Activated CD8-positive, alpha-beta T cell treated with anti-CD3 and anti-CD28 coated beads for 36 hours (primary cell): ENCODE measurements at regions of chr12 and their contacts with region 1.

Region 1: GRCh38 chr12:7219599-7220243 is 30.2 kb downstream of the PEX5 start:
- DNase-seq: peak; percentile 85
- ATAC-seq: peak; percentile 55
- H3K4me3 Mint-ChIP-seq: no peak overlapping the region
- H3K27ac Mint-ChIP-seq: no peak overlapping the region
- H3K4me1 Mint-ChIP-seq: no peaks in the 10 kb centered on the region
- H3K27me3 Mint-ChIP-seq: no peaks in the 10 kb centered on the region
- CTCF ChIP-seq: peak; percentile 87

Region 2: DNA sequence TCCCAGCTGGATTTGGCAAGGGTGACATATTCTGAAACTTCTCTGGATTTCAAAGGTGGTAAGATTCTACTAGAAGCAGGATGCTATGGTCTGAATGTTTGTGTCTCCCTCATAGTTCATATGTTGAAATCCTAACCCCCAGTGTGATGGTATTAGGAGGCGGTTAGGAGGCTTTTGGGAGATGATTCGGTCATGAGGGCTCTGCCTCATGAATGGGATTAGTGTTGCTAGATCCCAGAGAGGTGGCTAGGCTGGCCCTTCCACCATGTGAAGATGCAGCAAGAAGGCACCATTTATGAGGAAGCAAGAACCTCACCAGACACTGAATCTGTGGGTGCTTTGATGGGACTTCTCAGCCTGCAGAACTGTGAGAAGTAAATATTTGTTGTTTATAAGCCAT is 41.2 kb before region 1 on chr12:
- CTCF ChIA-PET with region 1: no interaction called
- POLR2A ChIA-PET with region 1: no interaction called
- intact Hi-C with region 1: no loop called
- DNase-seq: no peak
- ATAC-seq: no peak
- H3K4me3 Mint-ChIP-seq: no peak overlapping the region
- H3K27ac Mint-ChIP-seq: no peak overlapping the region
- H3K4me1 Mint-ChIP-seq: no peaks in the 10 kb centered on the region
- H3K27me3 Mint-ChIP-seq: peaks cover 17% of the 10 kb centered on the region
- CTCF ChIP-seq: no peak

Region 3: GRCh38 chr12:7460375-7461259 is 240.9 kb after region 1 on chr12:
- CTCF ChIA-PET with region 1: interaction called, 6 read pairs
- POLR2A ChIA-PET with region 1: no interaction called
- intact Hi-C with region 1: loop called (anchors 5 kb)
- DNase-seq: peak; percentile 59
- ATAC-seq: peak; percentile 67
- H3K4me3 Mint-ChIP-seq: no peak overlapping the region
- H3K27ac Mint-ChIP-seq: no peak overlapping the region
- H3K4me1 Mint-ChIP-seq: no peaks in the 10 kb centered on the region
- H3K27me3 Mint-ChIP-seq: peaks cover 12% of the 10 kb centered on the region
- CTCF ChIP-seq: peak; percentile 51

Region 4: GRCh38 chr12:7758758-7759140 is 539.0 kb after region 1 on chr12:
- CTCF ChIA-PET with region 1: no interaction called
- POLR2A ChIA-PET with region 1: no interaction called
- intact Hi-C with region 1: no loop called
- DNase-seq: no peak
- ATAC-seq: no peak
- H3K4me3 Mint-ChIP-seq: no peak overlapping the region
- H3K27ac Mint-ChIP-seq: no peak overlapping the region
- H3K4me1 Mint-ChIP-seq: no peaks in the 10 kb centered on the region
- H3K27me3 Mint-ChIP-seq: peaks cover 3% of the 10 kb centered on the region
- CTCF ChIP-seq: no peak